ENCODE measurements at regions of chr21 and their contacts with region 1.

Region 1: GRCh38 chr21:31198575-31198974 is 145.5 kb downstream of the TIAM1 start:
- DNase-seq: no peak
- ATAC-seq: peak; percentile 63 to 65
- H3K4me3 ChIP-seq: no peak overlapping the region
- H3K27ac ChIP-seq: no peak overlapping the region
- H3K4me1 ChIP-seq: peaks cover 21% of the 10 kb centered on the region
- H3K27me3 ChIP-seq: no peaks in the 10 kb centered on the region
- CTCF ChIP-seq: peak; percentile 75

Region 2: DNA sequence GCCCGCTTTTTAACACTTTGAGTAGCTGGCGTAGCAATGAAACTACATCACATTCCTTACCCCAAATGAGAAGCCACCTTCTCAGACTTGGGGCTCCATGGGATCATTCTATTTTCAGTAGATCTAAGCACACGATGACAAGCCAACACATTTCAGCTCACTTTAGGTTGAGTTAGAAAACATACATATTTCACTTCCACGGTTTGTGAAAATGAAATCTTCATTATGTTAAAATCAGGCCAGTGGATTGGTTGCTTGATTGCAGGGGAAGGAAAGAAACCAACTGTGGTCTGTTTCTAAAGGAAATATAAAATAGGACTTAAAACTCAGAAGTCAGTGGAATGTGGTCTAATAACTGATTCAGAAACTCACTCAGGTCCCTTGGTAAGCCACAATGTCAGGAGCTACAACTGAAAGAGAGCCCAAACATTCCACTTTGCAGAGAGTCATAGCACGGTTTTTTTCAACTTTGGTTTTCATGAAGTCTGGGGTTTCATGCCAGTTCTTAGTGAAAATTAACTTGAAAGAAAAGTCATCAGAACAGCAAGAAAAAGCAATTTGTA is 227.7 kb after region 1 on chr21:
- intact Hi-C with region 1: no loop called
- DNase-seq: no peak
- ATAC-seq: no peak
- H3K4me3 ChIP-seq: no peak overlapping the region
- H3K27ac ChIP-seq: no peak overlapping the region
- H3K4me1 ChIP-seq: no peaks in the 10 kb centered on the region
- H3K27me3 ChIP-seq: no peaks in the 10 kb centered on the region
- CTCF ChIP-seq: no peak

Region 3: GRCh38 chr21:31580866-31581276 is 382.3 kb after region 1 on chr21:
- intact Hi-C with region 1: loop called (anchors 10 kb)
- DNase-seq: peak; percentile 72
- ATAC-seq: peak; percentile 89 to 90
- H3K4me3 ChIP-seq: no peak overlapping the region
- H3K27ac ChIP-seq: no peak overlapping the region
- H3K4me1 ChIP-seq: no peaks in the 10 kb centered on the region
- H3K27me3 ChIP-seq: peaks cover 2% of the 10 kb centered on the region
- CTCF ChIP-seq: peak; percentile 89

Region 4: GRCh38 chr21:31604591-31605190 is 406.1 kb after region 1 on chr21:
- intact Hi-C with region 1: loop called (anchors 10 kb)
- DNase-seq: peak; percentile 76
- ATAC-seq: peak; percentile 75 to 80
- H3K4me3 ChIP-seq: no peak overlapping the region
- H3K27ac ChIP-seq: no peak overlapping the region
- H3K4me1 ChIP-seq: no peaks in the 10 kb centered on the region
- H3K27me3 ChIP-seq: no peaks in the 10 kb centered on the region
- CTCF ChIP-seq: peak; percentile 91

Region 5: GRCh38 chr21:32597205-32597604 is 1398.6 kb after region 1 on chr21:
- intact Hi-C with region 1: no loop called
- DNase-seq: no peak
- ATAC-seq: no peak
- H3K4me3 ChIP-seq: no peak overlapping the region
- H3K27ac ChIP-seq: no peak overlapping the region
- H3K4me1 ChIP-seq: no peaks in the 10 kb centered on the region
- H3K27me3 ChIP-seq: no peaks in the 10 kb centered on the region
- CTCF ChIP-seq: no peak